ENCODE measurements at regions of chr11 and their contacts with region 1.

Region 1: GRCh38 chr11:32176223-32176934 is 85.5 kb downstream of the RCN1 start:
- DNase-seq: peak; percentile 73
- ATAC-seq: peak; percentile 63 to 68

Region 2: GRCh38 chr11:31107062-31107461 is 1069.3 kb before region 1 on chr11:
- intact Hi-C with region 1: loop called in 1 of 2 experiments (anchors 5 kb)
- DNase-seq: peak; percentile 50
- ATAC-seq: peak in 1 of 2 donors; percentile 39

Region 3: GRCh38 chr11:31240338-31240904 is 936.0 kb before region 1 on chr11:
- intact Hi-C with region 1: loop called in 1 of 2 experiments (anchors 5 kb)
- DNase-seq: no peak
- ATAC-seq: peak in 1 of 2 donors; percentile 32

Region 4: GRCh38 chr11:32052218-32052617 is 124.2 kb before region 1 on chr11:
- intact Hi-C with region 1: loop called (anchors 1 to 2 kb)
- DNase-seq: peak; percentile 41
- ATAC-seq: peak; percentile 44 to 62